SK-N-SH (cell line): ENCODE measurements at regions of chr1 and their contacts with region 1.

Region 1: DNA sequence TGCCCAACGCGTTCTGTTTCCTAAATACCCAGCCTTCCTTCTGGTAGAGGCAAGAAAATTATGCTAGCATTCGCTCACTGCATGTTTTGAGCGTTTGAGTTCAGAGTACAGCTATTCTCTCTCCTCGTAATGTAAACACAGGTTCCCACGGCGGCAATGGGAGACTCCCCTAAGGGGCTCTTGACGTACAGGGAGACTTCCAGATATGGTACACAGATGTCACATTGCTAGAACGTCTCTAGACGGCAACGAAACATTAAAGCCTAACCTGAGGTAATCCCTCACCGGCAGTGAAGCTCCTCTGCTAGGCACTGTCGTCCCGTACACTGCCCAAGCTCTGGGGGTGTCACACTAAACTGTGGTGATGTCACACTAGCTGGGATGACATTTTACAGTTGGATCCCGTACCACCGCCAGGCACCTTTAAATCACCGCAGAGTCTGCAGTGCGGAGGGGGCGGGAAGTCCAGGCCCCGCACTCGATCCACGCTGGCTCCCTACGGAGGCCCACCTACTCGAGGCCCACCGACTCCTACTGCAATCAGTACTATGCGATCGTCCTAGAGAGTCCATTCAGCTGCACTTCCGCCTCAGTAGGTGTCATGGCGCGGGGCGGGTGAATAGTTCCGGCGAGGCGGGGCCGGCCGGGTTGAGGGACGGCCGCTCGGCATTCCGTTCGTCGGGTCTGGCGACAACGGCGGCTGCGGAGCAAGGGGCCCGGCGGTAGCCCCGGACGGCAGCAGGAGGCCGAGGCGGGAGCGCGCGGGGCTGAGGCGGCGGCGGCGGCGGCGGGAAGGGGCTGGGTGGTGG is at the start of gene HIPK1:
- DNase-seq: peak; percentile 95
- H3K4me3 ChIP-seq: peak within 1 kb of the TSS; percentile 93 to 99
- H3K27ac ChIP-seq: peak within 1 kb of the TSS; percentile 86 to 89
- H3K4me1 ChIP-seq: peaks cover 8 to 22% of the 10 kb centered on the region in 2 experiments
- H3K27me3 ChIP-seq: no peaks in the 10 kb centered on the region
- CTCF ChIP-seq: no peak
- EP300 ChIP-seq: peak; percentile 41 to 45; a peak in 1 of 4 replicates
- RAD21 ChIP-seq: no peak; the same call in 1 of the 2 replicates
- polyA plus RNA-seq, gene HIPK1: 7.1 and 10.1 TPM in 2 replicates

Region 2: DNA sequence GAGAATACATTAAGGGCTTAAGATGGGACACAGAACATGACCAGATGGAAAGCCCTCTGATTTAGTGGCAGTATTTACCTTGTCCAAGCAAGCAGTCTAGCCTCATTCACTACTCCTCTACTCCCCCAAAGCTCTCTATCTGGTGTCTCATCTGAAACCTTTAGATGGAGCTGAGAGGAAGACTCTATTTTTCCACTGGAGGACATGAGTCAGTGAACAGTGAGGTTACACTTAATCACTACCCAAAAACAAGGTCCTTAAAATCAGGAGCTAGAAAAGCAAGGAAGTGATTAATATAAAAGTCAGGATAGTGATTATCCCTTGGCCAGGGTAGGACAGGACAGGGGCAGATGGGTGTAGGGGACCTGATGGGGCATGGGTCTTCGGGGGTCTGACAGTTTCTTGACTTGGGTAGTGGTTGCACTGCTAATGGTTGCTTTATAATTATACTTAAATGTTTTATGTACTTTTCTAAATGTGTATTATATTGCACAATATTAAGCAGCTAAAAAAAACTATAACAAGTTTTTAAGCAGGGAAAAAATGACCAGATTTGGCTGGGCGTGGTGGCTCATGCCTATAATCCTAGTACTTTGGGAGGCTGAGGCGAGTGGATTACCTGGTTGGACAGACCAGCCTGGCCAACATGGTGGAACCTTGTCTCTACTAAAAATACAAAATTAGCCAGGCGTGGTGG is 60.6 kb before region 1 on chr1:
- CTCF ChIA-PET with region 1: no interaction called
- POLR2A ChIA-PET with region 1: no interaction called
- DNase-seq: no peak
- H3K4me3 ChIP-seq: no peak overlapping the region
- H3K27ac ChIP-seq: peak overlapping the region in 1 of 2 experiments; percentile 47; a peak in 2 of 4 replicates
- H3K4me1 ChIP-seq: peaks cover 0 to 16% of the 10 kb centered on the region in 2 experiments; a peak in 1 of 4 replicates
- H3K27me3 ChIP-seq: no peaks in the 10 kb centered on the region
- CTCF ChIP-seq: no peak
- EP300 ChIP-seq: no peak
- RAD21 ChIP-seq: no peak

Region 3: GRCh38 chr1:113904674-113905434 is 24.3 kb before region 1 on chr1 and contains the starts of genes AP4B1 and DCLRE1B:
- CTCF ChIA-PET with region 1: interaction called, 19 read pairs
- POLR2A ChIA-PET with region 1: interaction called, 21 read pairs
- DNase-seq: peak; percentile 95
- H3K4me3 ChIP-seq: peak within 1 kb of the TSS; percentile 62 to 84
- H3K27ac ChIP-seq: peak within 1 kb of the TSS; percentile 90 to 93
- H3K4me1 ChIP-seq: peaks cover 0 to 11% of the 10 kb centered on the region in 2 experiments; a peak in 2 of 4 replicates
- H3K27me3 ChIP-seq: no peaks in the 10 kb centered on the region
- CTCF ChIP-seq: peak; percentile 66
- EP300 ChIP-seq: peak; percentile 31 to 76; a peak in 3 of 4 replicates
- RAD21 ChIP-seq: peak; percentile 64
- polyA plus RNA-seq, gene AP4B1: 11.5 and 16.8 TPM in 2 replicates
- polyA plus RNA-seq, gene DCLRE1B: 3.0 and 3.3 TPM in 2 replicates

Region 4: GRCh38 chr1:113963281-113963906 is 34.2 kb after region 1 on chr1:
- CTCF ChIA-PET with region 1: interaction called, 10 read pairs
- POLR2A ChIA-PET with region 1: no interaction called
- DNase-seq: no peak
- H3K4me3 ChIP-seq: no peak overlapping the region
- H3K27ac ChIP-seq: no peak overlapping the region
- H3K4me1 ChIP-seq: no peaks in the 10 kb centered on the region
- H3K27me3 ChIP-seq: no peaks in the 10 kb centered on the region
- CTCF ChIP-seq: peak; percentile 27; the same call in 1 of the 2 replicates
- EP300 ChIP-seq: no peak
- RAD21 ChIP-seq: peak; percentile 38